CD4-positive, alpha-beta memory T cell (primary cell): ENCODE measurements at regions of chr2 and their contacts with region 1.

Region 1: DNA sequence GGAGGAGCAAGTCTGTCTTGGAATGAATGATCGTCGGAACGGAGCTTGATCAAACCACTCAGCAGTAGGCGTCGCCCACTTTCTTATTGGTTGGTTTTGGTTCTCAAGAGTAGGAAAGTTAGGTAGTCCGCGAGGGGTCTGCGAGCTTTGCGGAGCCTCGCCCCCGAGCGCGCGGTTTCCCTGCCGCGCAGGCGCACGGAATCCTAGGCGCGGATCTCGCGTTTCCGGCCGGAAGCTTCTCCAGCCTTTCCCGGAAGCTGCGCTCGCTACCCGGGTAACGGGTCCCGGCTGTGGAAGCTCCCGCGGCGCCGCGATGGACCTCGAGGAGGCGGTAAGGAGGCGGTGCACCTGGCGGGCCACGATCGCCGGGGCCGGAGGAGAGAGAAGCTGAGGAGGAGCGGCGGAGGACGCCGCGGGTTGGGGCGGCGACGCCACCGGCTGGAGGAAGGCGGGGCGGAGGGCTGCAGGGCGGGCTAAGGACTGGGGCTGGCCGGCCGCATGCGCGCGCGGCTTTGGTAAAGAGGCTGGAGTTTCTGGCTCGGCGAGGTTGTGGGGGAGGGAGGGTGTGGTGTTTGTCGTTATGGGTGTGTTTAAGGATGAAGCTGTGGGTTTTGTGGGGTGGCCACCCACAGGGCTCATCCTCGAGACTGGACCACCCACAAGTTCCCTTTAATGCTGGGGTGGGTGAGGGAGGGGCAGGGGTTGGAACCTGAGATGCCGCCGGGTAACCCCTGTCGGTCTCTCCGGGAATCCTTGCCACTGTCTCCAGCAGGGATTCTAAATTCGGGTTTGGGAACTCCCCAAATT is at the start of gene TAF1B:
- DNase-seq: peak; percentile 82 to 84 (median 83)
- H3K4me3 ChIP-seq: peak within 1 kb of the TSS; percentile 85 to 92
- H3K4me3 Mint-ChIP-seq: peak within 1 kb of the TSS; percentile 91 to 97 (median 94)
- H3K27ac ChIP-seq: peak within 1 kb of the TSS; percentile 76
- H3K27ac Mint-ChIP-seq: peak within 1 kb of the TSS; percentile 82 to 97 (median 93)
- H3K4me1 ChIP-seq: peaks cover 41% of the 10 kb centered on the region
- H3K4me1 Mint-ChIP-seq: peaks cover 32 to 50% (median 40%) of the 10 kb centered on the region in 4 donors
- H3K27me3 ChIP-seq: no peaks in the 10 kb centered on the region
- H3K27me3 Mint-ChIP-seq: no peaks in the 10 kb centered on the region
- total RNA-seq, gene TAF1B: 23.5 to 23.9 TPM

Region 2: GRCh38 chr2:9205963-9206948 is 637.2 kb before region 1 on chr2 and contains the start of gene ASAP2:
- CTCF ChIA-PET with region 1: no interaction called
- POLR2A ChIA-PET with region 1: no interaction called
- intact Hi-C with region 1: no loop called
- DNase-seq: peak in 3 of 5 donors; percentile 10 to 26 (median 12)
- H3K4me3 ChIP-seq: peak within 1 kb of the TSS; percentile 12 to 32
- H3K4me3 Mint-ChIP-seq: peak within 1 kb of the TSS; percentile 31 to 69 (median 44)
- H3K27ac ChIP-seq: no peak within 1 kb of the TSS
- H3K27ac Mint-ChIP-seq: no peak within 1 kb of the TSS
- H3K4me1 ChIP-seq: peaks cover 12% of the 10 kb centered on the region
- H3K4me1 Mint-ChIP-seq: peaks cover 4 to 13% (median 6%) of the 10 kb centered on the region in 4 donors
- H3K27me3 ChIP-seq: peaks cover 11% of the 10 kb centered on the region
- H3K27me3 Mint-ChIP-seq: peaks cover 27 to 39% of the 10 kb centered on the region in 2 donors
- total RNA-seq, gene ASAP2: not detected

Region 3: GRCh38 chr2:9423100-9423921 is 420.1 kb before region 1 on chr2 and contains the starts of genes CPSF3 and ITGB1BP1:
- CTCF ChIA-PET with region 1: no interaction called
- POLR2A ChIA-PET with region 1: interaction called, 5 read pairs
- intact Hi-C with region 1: loop called (anchors 5 kb)
- DNase-seq: peak; percentile 93 to 95 (median 94)
- H3K4me3 ChIP-seq: peak within 1 kb of the TSS; percentile 77 to 97
- H3K4me3 Mint-ChIP-seq: peak within 1 kb of the TSS in 5 of 8 donors; percentile 91 to 93 (median 91)
- H3K27ac ChIP-seq: peak within 1 kb of the TSS; percentile 88
- H3K27ac Mint-ChIP-seq: peak within 1 kb of the TSS in 6 of 7 donors; percentile 85 to 95 (median 94)
- H3K4me1 ChIP-seq: peaks cover 43% of the 10 kb centered on the region
- H3K4me1 Mint-ChIP-seq: peaks cover 24 to 30% (median 28%) of the 10 kb centered on the region in 4 donors
- H3K27me3 ChIP-seq: no peaks in the 10 kb centered on the region
- H3K27me3 Mint-ChIP-seq: no peaks in the 10 kb centered on the region
- total RNA-seq, gene CPSF3: 20.9 to 22.4 TPM
- total RNA-seq, gene ITGB1BP1: 55.1 to 55.8 TPM

Region 4: GRCh38 chr2:9951272-9951972 is 108.0 kb after region 1 on chr2 and contains the start of gene GRHL1:
- CTCF ChIA-PET with region 1: no interaction called
- POLR2A ChIA-PET with region 1: interaction called, 5 read pairs
- intact Hi-C with region 1: loop called (anchors 1 kb)
- DNase-seq: peak; percentile 85 to 92 (median 91)
- H3K4me3 ChIP-seq: peak within 1 kb of the TSS in 1 of 2 donors; percentile 58
- H3K4me3 Mint-ChIP-seq: peak within 1 kb of the TSS; percentile 80 to 91 (median 88)
- H3K27ac ChIP-seq: peak within 1 kb of the TSS; percentile 51
- H3K27ac Mint-ChIP-seq: peak within 1 kb of the TSS; percentile 15 to 73 (median 61)
- H3K4me1 ChIP-seq: peaks cover 13% of the 10 kb centered on the region
- H3K4me1 Mint-ChIP-seq: peaks cover 0 to 5% (median 4%) of the 10 kb centered on the region in 4 donors
- H3K27me3 ChIP-seq: no peaks in the 10 kb centered on the region
- H3K27me3 Mint-ChIP-seq: peaks cover 7 to 16% of the 10 kb centered on the region in 2 donors
- total RNA-seq, gene GRHL1: 0.33 to 0.49 TPM